HCT116 (cell line): ENCODE measurements at regions of chr11 and their contacts with region 1.

Region 1: DNA sequence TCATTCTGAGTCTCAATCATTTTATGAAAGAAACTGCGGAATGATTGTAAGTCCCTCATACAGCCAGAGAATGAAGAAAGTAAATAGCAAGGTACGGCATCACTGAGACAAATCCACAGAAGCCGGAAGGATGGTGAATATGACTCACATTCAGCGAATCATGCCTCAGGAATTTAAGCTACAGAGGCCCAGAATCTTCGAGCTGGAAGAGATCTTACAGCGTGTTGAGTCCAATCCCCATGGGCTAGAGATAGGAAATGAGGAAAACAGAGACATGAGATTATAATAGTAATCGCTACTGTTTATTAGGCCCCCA is 173.2 kb downstream of the KIF18A start:
- DNase-seq: peak; percentile 93
- ATAC-seq: peak; percentile 62
- H3K4me3 ChIP-seq: peak overlapping the region in 1 of 2 experiments; percentile 26; a peak in 2 of 4 replicates
- H3K27ac ChIP-seq: peak overlapping the region; percentile 98
- H3K4me1 ChIP-seq: peaks cover 31 to 59% of the 10 kb centered on the region in 2 experiments
- H3K27me3 ChIP-seq: no peaks in the 10 kb centered on the region
- CTCF ChIP-seq: no peak
- POLR2A ChIP-seq: peak; percentile 35
- RAD21 ChIP-seq: no peak

Region 2: DNA sequence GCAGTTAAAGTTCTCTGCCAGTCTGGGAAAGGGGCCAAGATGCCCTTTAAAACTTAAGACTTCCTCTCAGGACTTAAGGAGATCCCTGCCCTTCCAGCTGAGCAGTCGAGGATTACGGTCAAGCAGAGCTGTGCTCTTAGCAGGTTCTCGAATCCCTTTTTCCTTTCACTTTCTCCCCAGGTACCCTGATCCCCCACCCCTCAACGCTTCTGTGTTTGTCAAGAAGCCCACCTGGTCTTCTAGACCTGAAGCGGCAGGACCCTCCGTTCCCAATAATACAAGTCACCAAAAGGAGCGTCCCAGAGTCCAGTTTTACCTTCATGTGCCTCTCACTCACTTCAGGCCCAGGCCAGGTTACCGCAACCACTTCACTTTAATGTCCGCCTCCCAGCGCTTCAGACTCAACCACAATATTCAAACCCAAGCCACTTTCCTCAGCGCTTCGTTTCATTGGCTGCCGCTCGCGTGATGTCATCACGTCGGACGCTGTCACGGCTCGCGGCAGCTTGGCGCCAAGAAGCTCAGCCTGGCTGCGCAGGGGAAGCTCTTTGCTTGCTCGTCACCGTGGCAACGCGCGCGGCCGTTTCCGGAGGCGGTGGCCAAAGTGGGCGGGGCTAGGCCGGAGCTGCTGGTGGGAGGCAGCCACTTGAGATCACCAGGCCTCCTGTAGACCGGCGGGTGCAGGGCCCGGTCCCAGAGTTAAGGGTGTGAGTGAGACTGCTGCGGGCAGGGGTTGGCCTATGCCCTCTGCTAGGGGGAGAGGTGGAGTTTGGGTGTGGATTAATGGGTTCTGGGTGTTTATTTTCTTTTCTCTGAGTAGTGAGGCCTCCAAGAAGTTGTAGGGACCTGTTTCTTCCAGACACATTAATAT is 173.2 kb after region 1 on chr11 and contains the starts of genes KIF18A and METTL15:
- CTCF ChIA-PET with region 1: no interaction called
- POLR2A ChIA-PET with region 1: interaction called, 12 read pairs
- RAD21 ChIA-PET with region 1: interaction called in 1 of 2 experiments, 4 read pairs
- intact Hi-C with region 1: loop called (anchors 10 kb)
- DNase-seq: peak; percentile 97
- ATAC-seq: peak; percentile 89
- H3K4me3 ChIP-seq: peak within 1 kb of the TSS; percentile 78 to 81
- H3K27ac ChIP-seq: peak within 1 kb of the TSS; percentile 73
- H3K4me1 ChIP-seq: peaks cover 23 to 34% of the 10 kb centered on the region in 2 experiments; a peak in 3 of 4 replicates
- H3K27me3 ChIP-seq: no peaks in the 10 kb centered on the region
- CTCF ChIP-seq: no peak
- POLR2A ChIP-seq: peak; percentile 75
- RAD21 ChIP-seq: peak; percentile 4; the same call in 1 of the 2 replicates
- total RNA-seq, gene KIF18A: 50.7 TPM
- total RNA-seq, gene METTL15: 25.3 TPM